ENCODE measurements at regions of chr3 and their contacts with region 1.

Region 1: GRCh38 chr3:159919873-159920272 is 68.8 kb upstream of the IL12A start:
- DNase-seq: no peak
- ATAC-seq: peak; percentile 81
- H3K4me3 ChIP-seq: no peak overlapping the region
- H3K27ac ChIP-seq: peak overlapping the region; percentile 22; the same call in 1 of the 2 replicates
- H3K4me1 ChIP-seq: peaks cover 46% of the 10 kb centered on the region
- H3K27me3 ChIP-seq: no peaks in the 10 kb centered on the region
- CTCF ChIP-seq: no peak
- EP300 ChIP-seq: peak; percentile 75 to 80; a peak in 3 of 4 replicates
- POLR2A ChIP-seq: no peak
- RAD21 ChIP-seq: 0 out of 2 replicates have a peak, but pooled peaks have one; percentile 2

Region 2: DNA sequence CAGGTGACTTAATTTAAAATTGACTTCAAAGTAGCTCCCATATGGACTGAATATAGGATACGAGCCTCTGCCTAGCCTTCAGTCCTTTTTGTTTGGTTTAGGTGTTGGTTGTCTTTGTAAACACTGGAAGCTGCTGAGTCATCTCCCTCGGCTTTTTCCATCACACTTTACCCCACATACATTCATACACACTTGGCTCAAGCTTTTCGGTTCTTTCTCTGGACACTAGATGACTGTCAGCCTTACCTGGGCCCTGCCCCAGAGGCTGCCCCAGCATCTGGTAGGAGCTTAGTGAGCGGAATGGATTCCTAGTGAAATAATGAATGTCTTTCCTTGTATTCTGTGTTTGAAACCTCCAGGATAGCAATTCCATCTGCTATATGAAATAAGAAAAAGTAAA is 132.7 kb before region 1 on chr3:
- CTCF ChIA-PET with region 1: no interaction called
- POLR2A ChIA-PET with region 1: no interaction called
- RAD21 ChIA-PET with region 1: no interaction called
- SMC1A ChIA-PET with region 1: no interaction called
- in situ Hi-C with region 1: no loop called
- intact Hi-C with region 1: no loop called
- DNase-seq: no peak
- ATAC-seq: peak; percentile 38
- H3K4me3 ChIP-seq: no peak overlapping the region
- H3K27ac ChIP-seq: no peak overlapping the region
- H3K4me1 ChIP-seq: no peaks in the 10 kb centered on the region; the same call in 1 of the 2 replicates
- H3K27me3 ChIP-seq: no peaks in the 10 kb centered on the region
- CTCF ChIP-seq: no peak
- EP300 ChIP-seq: no peak
- POLR2A ChIP-seq: no peak
- RAD21 ChIP-seq: no peak

Region 3: GRCh38 chr3:159964166-159964973 is 44.5 kb after region 1 on chr3:
- CTCF ChIA-PET with region 1: no interaction called
- POLR2A ChIA-PET with region 1: interaction called, 3 read pairs
- RAD21 ChIA-PET with region 1: no interaction called
- SMC1A ChIA-PET with region 1: interaction called, 5 read pairs
- in situ Hi-C with region 1: no loop called
- intact Hi-C with region 1: loop called (anchors 2 kb)
- DNase-seq: peak; percentile 74
- ATAC-seq: peak; percentile 97
- H3K4me3 ChIP-seq: peak overlapping the region; percentile 60; the same call in 1 of the 2 replicates
- H3K27ac ChIP-seq: peak overlapping the region; percentile 71
- H3K4me1 ChIP-seq: peaks cover 11% of the 10 kb centered on the region; the same call in 1 of the 2 replicates
- H3K27me3 ChIP-seq: no peaks in the 10 kb centered on the region
- CTCF ChIP-seq: no peak
- EP300 ChIP-seq: peak in 1 of 2 experiments; percentile 92; a peak in 2 of 4 replicates
- POLR2A ChIP-seq: no peak
- RAD21 ChIP-seq: no peak

Region 4: GRCh38 chr3:160012108-160012507 is 92.2 kb after region 1 on chr3:
- CTCF ChIA-PET with region 1: interaction called, 16 read pairs
- POLR2A ChIA-PET with region 1: interaction called, 3 read pairs
- RAD21 ChIA-PET with region 1: interaction called, 3 read pairs
- SMC1A ChIA-PET with region 1: interaction called, 16 read pairs
- in situ Hi-C with region 1: no loop called
- intact Hi-C with region 1: no loop called
- DNase-seq: peak; percentile 81
- ATAC-seq: peak; percentile 83
- H3K4me3 ChIP-seq: peak overlapping the region; percentile 22; the same call in 1 of the 2 replicates
- H3K27ac ChIP-seq: peak overlapping the region; percentile 94
- H3K4me1 ChIP-seq: peaks cover 48% of the 10 kb centered on the region
- H3K27me3 ChIP-seq: no peaks in the 10 kb centered on the region
- CTCF ChIP-seq: no peak
- EP300 ChIP-seq: peak; percentile 87 to 95; a peak in 3 of 4 replicates
- POLR2A ChIP-seq: no peak
- RAD21 ChIP-seq: no peak

Measured in GM12878 (cell line).